ENCODE measurements at regions of chr3 and their contacts with region 1.

Region 1: GRCh38 chr3:122921791-122922651 is 105.5 kb downstream of the SEMA5B start:
- DNase-seq: peak; percentile 10
- H3K4me3 Mint-ChIP-seq: no peak overlapping the region
- H3K27ac Mint-ChIP-seq: no peak overlapping the region
- H3K4me1 Mint-ChIP-seq: no peaks in the 10 kb centered on the region
- H3K27me3 Mint-ChIP-seq: peaks cover 27% of the 10 kb centered on the region

Region 2: GRCh38 chr3:122754929-122755328 is 167.1 kb before region 1 on chr3:
- intact Hi-C with region 1: loop called (anchors 10 kb)
- DNase-seq: no peak
- H3K4me3 Mint-ChIP-seq: no peak overlapping the region
- H3K27ac Mint-ChIP-seq: no peak overlapping the region
- H3K4me1 Mint-ChIP-seq: peaks cover 9% of the 10 kb centered on the region
- H3K27me3 Mint-ChIP-seq: no peaks in the 10 kb centered on the region

Region 3: DNA sequence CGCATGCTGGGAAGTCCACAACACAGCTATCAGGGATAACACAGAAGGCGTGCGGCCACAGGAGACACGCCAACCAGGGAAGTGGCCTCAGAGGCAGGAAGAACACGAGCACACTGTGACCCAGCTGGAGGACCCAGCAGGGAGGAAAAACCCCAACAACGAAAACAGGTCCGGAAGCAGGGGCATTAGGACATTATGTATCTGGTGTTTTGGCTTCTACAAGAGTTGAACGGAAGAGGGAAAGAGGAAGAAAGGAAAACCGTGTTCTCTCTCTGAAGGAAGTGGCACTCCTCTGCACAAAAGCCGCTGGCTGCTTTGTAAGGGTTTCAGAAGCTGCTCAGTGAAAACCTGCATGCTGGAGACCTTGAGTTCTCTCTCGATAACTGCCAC is 601.0 kb after region 1 on chr3:
- intact Hi-C with region 1: no loop called
- DNase-seq: no peak
- H3K4me3 Mint-ChIP-seq: no peak overlapping the region
- H3K27ac Mint-ChIP-seq: no peak overlapping the region
- H3K4me1 Mint-ChIP-seq: peaks cover 28% of the 10 kb centered on the region
- H3K27me3 Mint-ChIP-seq: no peaks in the 10 kb centered on the region